Naive thymus-derived CD8-positive, alpha-beta T cell (primary cell): ENCODE measurements at regions of chr10 and their contacts with region 1.

Region 1: GRCh38 chr10:17228091-17228940 is at the start of gene VIM:
- DNase-seq: peak; percentile 59 to 91 (median 79)
- ATAC-seq: peak; percentile 14 to 45
- H3K4me3 Mint-ChIP-seq: peak within 1 kb of the TSS; percentile 91 to 99 (median 98)
- H3K27ac Mint-ChIP-seq: peak within 1 kb of the TSS; percentile 95 to 100 (median 99)
- H3K4me1 Mint-ChIP-seq: peaks cover 27 to 52% (median 48%) of the 10 kb centered on the region in 4 donors
- H3K27me3 Mint-ChIP-seq: no peaks in the 10 kb centered on the region
- polyA plus RNA-seq, gene VIM: 295 to 479 (median 434) TPM

Region 2: GRCh38 chr10:16817125-16818019 is 410.9 kb before region 1 on chr10 and contains the start of gene RSU1:
- POLR2A ChIA-PET with region 1: interaction called, 38 read pairs
- DNase-seq: peak; percentile 98 to 100 (median 100)
- ATAC-seq: peak; percentile 96 to 97
- H3K4me3 Mint-ChIP-seq: peak within 1 kb of the TSS; percentile 85 to 98 (median 94)
- H3K27ac Mint-ChIP-seq: peak within 1 kb of the TSS; percentile 93 to 98 (median 97)
- H3K4me1 Mint-ChIP-seq: peaks cover 22 to 50% (median 46%) of the 10 kb centered on the region in 4 donors
- H3K27me3 Mint-ChIP-seq: peaks cover 0 to 5% (median 0%) of the 10 kb centered on the region in 5 donors
- polyA plus RNA-seq, gene RSU1: 127 to 149 (median 138) TPM

Region 3: GRCh38 chr10:17175551-17175950 is 52.8 kb before region 1 on chr10:
- POLR2A ChIA-PET with region 1: interaction called, 13 read pairs
- DNase-seq: peak in 4 of 10 donors; percentile 4 to 20 (median 18)
- ATAC-seq: peak; percentile 85 to 91
- H3K4me3 Mint-ChIP-seq: peak overlapping the region; percentile 63 to 89 (median 74)
- H3K27ac Mint-ChIP-seq: peak overlapping the region; percentile 9 to 92 (median 86)
- H3K4me1 Mint-ChIP-seq: peaks cover 4 to 21% (median 10%) of the 10 kb centered on the region in 4 donors
- H3K27me3 Mint-ChIP-seq: no peaks in the 10 kb centered on the region

Region 4: GRCh38 chr10:17206210-17206709 is 22.1 kb before region 1 on chr10:
- POLR2A ChIA-PET with region 1: interaction called, 168 read pairs
- DNase-seq: peak in 9 of 10 donors; percentile 26 to 80 (median 54)
- ATAC-seq: peak; percentile 70 to 82
- H3K4me3 Mint-ChIP-seq: peak overlapping the region in 9 of 10 donors; percentile 36 to 78 (median 71)
- H3K27ac Mint-ChIP-seq: peak overlapping the region; percentile 91 to 97 (median 94)
- H3K4me1 Mint-ChIP-seq: peaks cover 13 to 42% (median 33%) of the 10 kb centered on the region in 4 donors
- H3K27me3 Mint-ChIP-seq: no peaks in the 10 kb centered on the region

Region 5: DNA sequence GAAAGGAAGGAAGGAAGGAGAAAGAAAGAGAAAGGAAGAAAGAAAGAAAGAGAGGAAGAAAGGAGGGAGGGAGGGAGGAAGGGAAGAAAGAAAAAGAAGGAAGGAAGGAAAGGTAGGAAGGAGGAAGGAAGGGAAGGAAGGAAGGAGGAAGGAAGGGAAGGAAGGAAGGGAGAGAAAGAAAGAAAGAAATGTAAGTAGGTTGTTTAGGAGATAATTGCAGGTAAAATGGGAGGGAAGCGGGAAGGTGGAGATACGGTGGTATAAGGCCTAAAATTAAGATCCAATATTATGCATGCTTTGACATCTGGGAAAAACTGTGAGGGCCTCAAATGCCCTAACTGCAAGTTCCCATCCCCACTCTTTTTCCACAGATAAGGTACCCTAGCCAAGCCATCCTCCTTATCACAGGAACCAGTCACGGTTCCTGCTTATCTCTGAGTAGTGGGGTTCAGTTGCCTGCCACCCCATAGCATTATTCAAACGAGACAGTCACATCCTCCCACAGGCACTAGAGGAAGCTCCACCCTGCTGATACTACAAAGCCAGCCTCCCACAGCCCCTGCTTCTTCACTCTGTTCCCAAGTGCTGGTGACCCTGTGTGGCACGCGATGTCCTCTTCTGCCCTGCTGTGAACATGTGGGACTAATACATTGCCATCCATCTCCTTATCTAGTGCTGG is 197.4 kb after region 1 on chr10:
- POLR2A ChIA-PET with region 1: interaction called, 20 read pairs
- DNase-seq: peak in 9 of 10 donors; percentile 11 to 71 (median 33)
- ATAC-seq: peak; percentile 55 to 61
- H3K4me3 Mint-ChIP-seq: peak overlapping the region; percentile 34 to 82 (median 74)
- H3K27ac Mint-ChIP-seq: peak overlapping the region; percentile 91 to 98 (median 94)
- H3K4me1 Mint-ChIP-seq: peaks cover 36 to 81% (median 77%) of the 10 kb centered on the region in 4 donors
- H3K27me3 Mint-ChIP-seq: no peaks in the 10 kb centered on the region